Activated T-helper 1 cell treated with anti-CD3 and anti-CD28 coated beads, Interleukin-12 subunit alpha, Interleukin-12 subunit beta, Interleukin-2, Interleukin-4 antibody, amounts not matched to agents 30 ng/mL and 10 ng/mL and 1 ng/mL, durations not matched to agents 14 hours and 24 hours and 36 hours (primary cell): ENCODE measurements at regions of chr3 and their contacts with region 1.

Region 1: DNA sequence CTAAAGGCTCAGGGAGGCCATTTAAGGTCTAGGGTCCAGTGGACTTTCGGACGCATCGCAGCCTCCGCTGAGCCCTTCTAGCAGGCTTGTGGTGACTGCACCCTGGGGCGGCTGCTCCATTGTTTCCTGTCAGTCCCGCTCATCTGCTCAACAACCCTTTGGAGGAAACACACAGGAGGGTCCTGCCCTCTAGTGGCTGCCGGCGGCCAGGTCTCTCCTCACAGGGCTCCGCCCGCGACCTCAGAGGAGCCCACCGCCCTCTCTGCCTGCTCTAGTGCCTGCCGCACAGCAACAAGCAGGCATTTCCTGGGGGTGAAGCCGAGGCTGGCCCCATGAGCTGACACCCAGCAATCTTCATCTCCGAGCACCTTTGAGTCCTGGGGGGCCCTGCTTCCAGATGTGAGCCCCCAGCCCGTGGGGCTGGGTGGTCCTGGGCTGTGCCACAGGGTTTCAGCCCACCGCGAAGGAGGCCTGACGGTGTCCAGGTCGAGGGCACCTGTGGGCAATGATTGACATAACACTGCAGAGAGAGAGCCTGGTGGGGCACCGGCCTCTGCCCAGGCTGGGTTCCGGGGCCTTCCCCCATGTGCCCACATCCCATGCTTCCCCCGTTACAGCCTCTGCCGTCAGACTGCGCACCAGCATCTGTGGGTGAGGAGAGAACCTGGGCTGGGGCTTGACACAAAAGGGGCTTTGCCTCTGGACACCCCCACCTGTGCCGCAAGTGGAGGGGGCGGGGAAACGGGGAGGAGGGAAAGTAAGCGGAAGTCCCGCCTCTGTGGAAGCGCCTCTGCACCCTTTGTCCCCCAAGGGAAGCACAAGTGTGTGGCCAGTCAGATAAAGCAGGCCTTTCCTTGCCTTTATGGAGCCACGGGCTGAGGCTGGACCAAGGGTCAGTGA is 27.0 kb upstream of the SFMBT1 start:
- DNase-seq: peak; percentile 85
- H3K4me3 Mint-ChIP-seq: peak overlapping the region; percentile 89
- H3K27ac Mint-ChIP-seq: peak overlapping the region; percentile 95
- H3K4me1 Mint-ChIP-seq: peaks cover 19% of the 10 kb centered on the region
- H3K27me3 Mint-ChIP-seq: peaks cover 2% of the 10 kb centered on the region

Region 2: GRCh38 chr3:52705688-52706686 is 366.9 kb before region 1 on chr3 and contains the starts of genes GLT8D1 and SPCS1:
- intact Hi-C with region 1: loop called (anchors 1 kb)
- DNase-seq: peak; percentile 82
- H3K4me3 Mint-ChIP-seq: peak within 1 kb of the TSS; percentile 99
- H3K27ac Mint-ChIP-seq: peak within 1 kb of the TSS; percentile 94
- H3K4me1 Mint-ChIP-seq: peaks cover 33% of the 10 kb centered on the region
- H3K27me3 Mint-ChIP-seq: no peaks in the 10 kb centered on the region
- total RNA-seq, gene GLT8D1: 33.9 and 40.6 TPM in 2 replicates
- total RNA-seq, gene SPCS1: 122 and 132 TPM in 2 replicates

Region 3: GRCh38 chr3:52770496-52771333 is 302.2 kb before region 1 on chr3 and contains the start of gene NEK4:
- intact Hi-C with region 1: loop called (anchors 1 kb)
- DNase-seq: peak; percentile 84
- H3K4me3 Mint-ChIP-seq: peak within 1 kb of the TSS; percentile 94
- H3K27ac Mint-ChIP-seq: peak within 1 kb of the TSS; percentile 96
- H3K4me1 Mint-ChIP-seq: peaks cover 22% of the 10 kb centered on the region
- H3K27me3 Mint-ChIP-seq: peaks cover 4% of the 10 kb centered on the region
- total RNA-seq, gene NEK4: 27.8 and 32.9 TPM in 2 replicates

Region 4: DNA sequence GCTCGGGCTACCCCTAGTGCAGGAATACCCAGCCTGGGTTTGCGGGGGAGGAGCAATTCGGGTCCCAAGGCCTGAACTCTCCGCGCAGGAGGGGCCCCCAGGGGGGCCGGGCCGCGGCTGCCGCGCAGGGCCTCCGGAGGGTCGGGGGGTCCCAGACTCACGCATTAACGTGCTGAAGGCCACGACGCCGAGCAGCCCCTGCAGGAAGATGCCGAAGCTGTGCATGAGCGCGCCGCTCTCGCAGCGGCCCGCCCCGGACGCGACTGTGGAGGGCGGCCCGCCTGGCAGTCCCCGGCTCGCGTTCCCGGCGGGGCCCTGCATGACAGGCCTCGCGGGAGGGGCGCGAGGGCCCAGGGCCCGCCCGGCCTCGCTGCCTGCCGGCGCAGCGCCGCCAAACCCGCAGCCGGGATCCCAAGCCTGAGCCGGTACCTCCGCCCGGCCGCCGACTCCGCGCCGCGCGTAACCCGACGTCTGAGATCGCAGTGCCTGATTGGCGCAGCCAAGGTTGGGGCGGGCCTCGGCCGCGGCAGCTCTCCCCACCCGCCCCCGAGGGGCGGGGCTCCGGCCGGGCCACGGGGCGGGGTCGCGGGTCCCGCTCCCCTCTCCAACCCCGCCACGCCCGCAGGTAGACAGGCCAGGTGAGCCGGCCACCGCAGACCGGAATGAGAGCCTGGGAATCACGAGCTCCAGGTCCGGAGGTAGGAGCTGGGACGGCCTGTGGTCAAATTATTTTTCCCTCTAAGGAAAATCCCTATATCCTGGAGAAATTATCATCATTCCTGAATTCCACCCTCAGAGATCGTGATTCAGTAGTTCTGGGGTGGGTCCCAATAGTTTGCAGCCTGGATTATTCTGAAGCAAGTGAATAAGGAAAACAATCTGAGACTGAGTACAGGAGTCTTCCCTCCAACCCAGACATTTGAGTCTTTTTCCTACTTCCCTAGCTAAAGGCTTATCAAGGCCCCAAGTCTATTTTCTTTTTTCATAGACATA is 175.5 kb before region 1 on chr3 and contains the start of gene STIMATE:
- intact Hi-C with region 1: loop called (anchors 1 kb)
- DNase-seq: peak; percentile 87
- H3K4me3 Mint-ChIP-seq: peak within 1 kb of the TSS; percentile 97
- H3K27ac Mint-ChIP-seq: peak within 1 kb of the TSS; percentile 77
- H3K4me1 Mint-ChIP-seq: peaks cover 49% of the 10 kb centered on the region
- H3K27me3 Mint-ChIP-seq: no peaks in the 10 kb centered on the region
- total RNA-seq, gene STIMATE: 19.8 and 20.1 TPM in 2 replicates

Region 5: DNA sequence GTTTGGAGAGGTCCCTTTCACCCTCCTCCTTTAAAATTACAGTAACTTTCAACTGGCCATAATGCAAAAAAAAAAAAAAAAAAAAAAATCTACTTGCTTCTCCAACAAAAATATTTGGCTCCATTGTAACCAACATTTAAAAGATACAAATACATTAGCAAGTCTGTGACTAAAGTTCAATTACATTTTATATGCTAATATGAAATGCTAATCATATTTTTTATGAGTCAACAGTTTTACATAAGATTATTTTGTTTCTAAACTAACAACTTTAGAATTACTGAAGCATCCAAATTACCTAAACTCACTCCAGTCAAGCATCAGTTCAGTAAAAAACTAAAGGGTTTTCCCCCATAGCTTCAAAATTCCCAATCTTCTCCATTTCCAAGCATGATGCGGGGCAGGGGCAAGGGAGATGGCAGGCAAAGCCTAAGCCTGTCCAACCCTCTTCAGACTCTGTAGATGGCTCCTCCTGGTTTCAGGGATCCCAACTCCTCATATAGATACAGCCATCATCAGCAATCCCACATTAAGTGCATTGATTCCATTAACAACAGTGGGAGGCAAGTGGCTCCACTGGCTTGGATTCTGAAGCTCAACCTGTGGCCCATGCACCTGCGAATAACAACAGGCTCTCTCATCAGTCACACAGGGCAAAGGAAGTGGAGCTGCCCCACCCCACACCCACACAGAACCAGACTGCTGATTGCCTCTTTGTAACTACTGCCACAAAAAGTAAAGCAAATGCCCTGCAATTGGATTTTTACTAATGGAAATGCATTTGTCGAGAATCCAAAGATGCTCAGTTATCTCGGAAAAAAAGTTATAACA is 42.1 kb before region 1 on chr3:
- intact Hi-C with region 1: loop called (anchors 1 kb)
- DNase-seq: peak; percentile 16
- H3K4me3 Mint-ChIP-seq: no peak overlapping the region
- H3K27ac Mint-ChIP-seq: peak overlapping the region; percentile 2
- H3K4me1 Mint-ChIP-seq: peaks cover 31% of the 10 kb centered on the region
- H3K27me3 Mint-ChIP-seq: peaks cover 1% of the 10 kb centered on the region

Region 6: DNA sequence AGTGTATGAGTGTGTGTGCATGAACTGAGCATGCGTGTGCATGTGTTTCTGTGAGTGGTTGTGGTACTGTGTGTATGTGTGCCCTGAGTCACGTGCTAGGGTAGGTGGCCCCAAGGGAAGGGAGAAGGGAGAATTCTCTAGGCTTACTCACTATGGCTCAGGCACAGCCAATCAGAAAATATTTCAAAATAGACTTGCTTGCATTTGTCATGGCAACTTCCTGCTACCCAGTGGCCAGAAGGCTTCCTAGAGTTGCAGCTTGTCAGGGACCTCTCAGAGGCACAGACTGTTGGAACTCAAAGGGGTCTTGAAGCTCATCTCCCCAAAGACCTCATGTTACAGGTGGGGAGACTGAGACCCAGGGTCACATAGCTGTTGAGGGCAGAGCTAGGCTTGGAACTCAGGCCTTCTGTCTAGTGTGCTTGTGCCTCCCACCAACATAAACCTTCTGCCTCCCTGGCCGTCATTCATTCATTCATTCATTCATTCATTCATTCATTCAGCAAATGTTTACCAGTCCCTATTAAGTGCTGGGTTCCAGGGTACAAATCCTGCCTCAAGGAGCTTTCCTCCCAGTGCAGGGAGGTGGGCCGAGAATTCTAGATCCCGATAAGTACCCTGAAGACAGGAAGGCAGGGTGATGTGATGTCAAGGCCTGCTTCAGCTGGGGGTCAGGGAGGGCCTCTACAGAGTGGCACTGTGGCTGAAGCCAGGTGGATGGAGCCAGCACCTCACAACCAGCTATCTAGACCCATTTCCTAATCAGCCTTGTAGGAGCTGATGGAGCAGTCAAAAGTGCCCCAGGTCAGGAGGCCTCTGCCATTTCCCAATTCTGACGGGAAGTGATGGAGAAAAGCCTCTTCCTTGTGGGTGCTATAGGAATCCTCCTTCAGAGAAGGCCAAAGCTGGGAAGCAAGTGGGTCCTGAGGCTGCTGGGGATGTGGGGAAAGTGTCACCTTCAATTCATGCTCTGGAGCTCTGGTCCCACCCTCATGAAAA is 68.2 kb after region 1 on chr3:
- intact Hi-C with region 1: no loop called
- DNase-seq: no peak
- H3K4me3 Mint-ChIP-seq: no peak overlapping the region
- H3K27ac Mint-ChIP-seq: no peak overlapping the region
- H3K4me1 Mint-ChIP-seq: no peaks in the 10 kb centered on the region
- H3K27me3 Mint-ChIP-seq: no peaks in the 10 kb centered on the region

Region 7: GRCh38 chr3:53236112-53236841 is 163.4 kb after region 1 on chr3:
- intact Hi-C with region 1: no loop called
- DNase-seq: no peak
- H3K4me3 Mint-ChIP-seq: no peak overlapping the region
- H3K27ac Mint-ChIP-seq: peak overlapping the region; percentile 71
- H3K4me1 Mint-ChIP-seq: peaks cover 16% of the 10 kb centered on the region
- H3K27me3 Mint-ChIP-seq: no peaks in the 10 kb centered on the region